Right cardiac atrium (tissue), 5 donors: ENCODE measurements at regions of chr3 and their contacts with region 1.

Region 1: GRCh38 chr3:55485211-55485791 is 1.8 kb downstream of the WNT5A start:
- DNase-seq: peak; percentile 84 to 92 (median 91)
- ATAC-seq: peak; percentile 77 to 81
- H3K4me3 ChIP-seq: peak overlapping the region; percentile 81
- H3K27ac ChIP-seq: peak overlapping the region; percentile 7
- H3K4me1 ChIP-seq: no peaks in the 10 kb centered on the region
- H3K27me3 ChIP-seq: no peaks in the 10 kb centered on the region

Region 2: GRCh38 chr3:55721716-55722484 is 236.6 kb after region 1 on chr3:
- intact Hi-C with region 1: loop called (anchors 5 to 10 kb)
- DNase-seq: peak; percentile 28 to 57 (median 55)
- ATAC-seq: peak; percentile 55 to 61
- H3K4me3 ChIP-seq: no peak overlapping the region
- H3K27ac ChIP-seq: no peak overlapping the region
- H3K4me1 ChIP-seq: no peaks in the 10 kb centered on the region
- H3K27me3 ChIP-seq: no peaks in the 10 kb centered on the region

Region 3: DNA sequence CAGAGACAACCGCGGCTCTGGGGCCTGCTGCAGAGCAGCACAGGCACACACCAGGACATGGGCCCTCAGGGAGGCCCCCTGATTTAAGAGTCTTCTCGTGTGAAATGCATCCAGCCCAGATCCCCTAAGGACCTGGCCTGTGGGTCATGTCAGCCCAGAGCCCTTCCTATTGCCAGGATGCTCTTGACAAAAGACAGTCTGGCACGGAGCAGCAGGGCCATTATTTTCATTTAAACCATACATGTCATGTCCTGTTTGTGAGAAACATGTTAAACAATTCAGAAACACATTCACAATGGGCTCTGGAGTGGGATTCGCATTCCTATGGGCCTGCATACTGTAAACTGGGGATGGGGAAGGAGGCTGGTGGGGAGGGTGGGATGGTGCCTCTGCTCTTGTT is 369.2 kb after region 1 on chr3:
- intact Hi-C with region 1: no loop called
- DNase-seq: no peak
- ATAC-seq: no peak
- H3K4me3 ChIP-seq: no peak overlapping the region
- H3K27ac ChIP-seq: no peak overlapping the region
- H3K4me1 ChIP-seq: no peaks in the 10 kb centered on the region
- H3K27me3 ChIP-seq: no peaks in the 10 kb centered on the region

Region 4: DNA sequence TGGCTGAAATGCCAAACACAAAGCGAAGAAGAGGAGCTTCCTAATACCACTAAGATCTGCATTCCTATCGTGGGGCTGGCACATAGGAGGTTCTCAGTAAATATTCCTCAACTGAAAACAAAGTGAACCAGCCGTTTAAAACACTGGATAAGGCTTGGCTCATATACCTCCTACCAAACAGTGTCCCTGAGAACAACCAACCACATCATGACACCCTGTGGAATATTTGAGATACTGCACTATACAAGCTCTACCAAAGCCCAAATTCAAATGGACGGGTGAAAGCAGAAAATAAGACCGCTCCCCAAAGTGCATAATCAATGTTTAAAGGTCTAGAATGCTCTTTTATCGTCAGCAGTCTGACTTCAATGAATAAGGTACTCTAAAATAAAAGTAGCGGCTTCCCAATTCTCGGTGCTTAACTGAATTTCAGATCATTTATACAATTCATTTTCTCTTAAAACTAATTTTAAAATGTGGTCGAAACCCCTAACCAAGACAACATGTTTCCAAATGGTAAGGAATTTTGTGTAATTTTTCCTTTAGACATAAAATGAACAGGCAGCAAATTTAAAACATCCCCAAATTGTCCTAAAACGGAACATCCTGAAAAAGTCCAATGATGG is 557.1 kb after region 1 on chr3:
- intact Hi-C with region 1: loop called in 3 of 4 experiments (anchors 10 kb)
- DNase-seq: no peak
- ATAC-seq: peak; percentile 71 to 84
- H3K4me3 ChIP-seq: no peak overlapping the region
- H3K27ac ChIP-seq: no peak overlapping the region
- H3K4me1 ChIP-seq: no peaks in the 10 kb centered on the region
- H3K27me3 ChIP-seq: no peaks in the 10 kb centered on the region

Region 5: DNA sequence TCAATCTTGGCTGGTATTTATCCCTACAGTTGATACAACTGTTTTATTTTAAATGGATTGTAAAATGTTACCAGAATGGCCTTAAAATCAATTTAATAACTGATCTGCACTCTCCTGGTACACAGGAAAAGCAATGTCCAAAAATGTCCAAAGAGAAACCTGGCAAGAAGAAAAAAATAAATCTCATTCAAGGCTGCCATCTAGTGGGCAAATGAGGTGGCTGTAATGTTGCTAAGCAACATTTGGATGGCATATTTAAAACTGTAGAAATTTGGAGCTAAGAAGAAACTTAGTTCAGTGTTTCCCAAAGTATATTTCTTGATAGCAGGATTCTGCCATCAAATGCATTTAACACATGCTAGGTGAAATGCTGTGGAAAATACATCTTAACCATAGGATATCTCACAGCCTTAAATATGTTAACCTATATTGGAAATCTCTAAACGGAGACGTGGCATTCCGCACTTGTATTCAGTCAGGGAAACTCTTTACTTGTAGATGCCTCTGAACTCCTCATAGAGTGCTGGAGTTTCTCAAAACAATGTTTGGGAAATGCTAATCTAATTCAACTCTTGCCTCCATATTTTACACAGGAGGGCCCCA is 766.1 kb after region 1 on chr3:
- intact Hi-C with region 1: loop called in 2 of 4 experiments (anchors 10 kb)
- DNase-seq: peak in 1 of 3 donors; percentile 12
- ATAC-seq: peak in 1 of 2 donors; percentile 38
- H3K4me3 ChIP-seq: no peak overlapping the region
- H3K27ac ChIP-seq: no peak overlapping the region
- H3K4me1 ChIP-seq: no peaks in the 10 kb centered on the region
- H3K27me3 ChIP-seq: no peaks in the 10 kb centered on the region

Region 6: GRCh38 chr3:56494686-56495322 is 1009.5 kb after region 1 on chr3:
- intact Hi-C with region 1: loop called in 1 of 4 experiments (anchors 10 kb)
- DNase-seq: peak; percentile 76 to 87 (median 86)
- ATAC-seq: peak; percentile 73 to 86
- H3K4me3 ChIP-seq: no peak overlapping the region
- H3K27ac ChIP-seq: no peak overlapping the region
- H3K4me1 ChIP-seq: no peaks in the 10 kb centered on the region
- H3K27me3 ChIP-seq: no peaks in the 10 kb centered on the region